CD8-positive, alpha-beta T cell (primary cell): ENCODE measurements at regions of chr6 and their contacts with region 1.

Region 1: DNA sequence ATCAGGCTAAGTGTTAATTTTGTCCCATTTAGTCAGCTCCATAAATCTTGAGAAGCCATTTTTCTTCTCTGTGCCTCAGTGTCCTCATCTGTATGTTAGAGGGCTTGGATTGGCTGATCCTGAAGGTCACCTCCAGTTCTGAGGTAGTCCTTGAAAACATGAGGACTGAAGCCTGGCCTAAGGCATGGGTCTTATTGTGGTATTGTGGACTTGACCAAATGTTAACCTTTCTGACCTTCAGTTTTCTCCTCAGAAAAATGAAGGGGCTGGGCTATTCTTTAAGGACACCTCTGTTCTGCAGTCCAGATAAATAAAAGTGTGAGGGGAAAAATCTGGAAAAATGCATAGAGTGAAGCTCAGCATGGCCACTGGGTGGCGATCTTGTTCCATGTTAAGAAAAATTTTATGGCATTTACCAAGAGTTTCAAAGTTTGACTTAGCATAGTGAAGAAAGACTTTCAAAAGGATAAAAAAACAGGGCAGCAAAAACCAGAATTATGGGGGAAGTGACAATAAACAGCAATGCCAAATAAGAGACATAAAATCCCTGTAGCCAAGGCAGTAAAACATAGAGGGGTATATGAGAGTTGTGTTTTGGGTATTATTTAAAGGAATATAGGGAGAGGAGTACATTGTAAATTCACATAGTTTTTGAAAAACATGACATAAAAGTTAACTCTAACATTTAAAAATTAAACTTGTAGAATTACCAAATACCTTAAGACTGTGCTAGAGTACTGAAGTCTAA is 13.2 kb upstream of the TFB1M start:
- DNase-seq: peak in 8 of 9 experiments; percentile 37 to 76 (median 64)
- ATAC-seq: peak; percentile 58
- H3K4me3 ChIP-seq: no peak overlapping the region
- H3K4me3 Mint-ChIP-seq: no peak overlapping the region
- H3K27ac ChIP-seq: no peak overlapping the region
- H3K27ac Mint-ChIP-seq: peak overlapping the region; percentile 3
- H3K4me1 ChIP-seq: peaks cover 10% of the 10 kb centered on the region
- H3K4me1 Mint-ChIP-seq: peaks cover 11% of the 10 kb centered on the region
- H3K27me3 ChIP-seq: no peaks in the 10 kb centered on the region
- H3K27me3 Mint-ChIP-seq: no peaks in the 10 kb centered on the region
- CTCF ChIP-seq: peak; percentile 89

Region 2: GRCh38 chr6:155301867-155302266 is 25.6 kb before region 1 on chr6:
- CTCF ChIA-PET with region 1: no interaction called
- POLR2A ChIA-PET with region 1: no interaction called
- intact Hi-C with region 1: no loop called
- DNase-seq: no peak
- ATAC-seq: no peak
- H3K4me3 ChIP-seq: no peak overlapping the region
- H3K4me3 Mint-ChIP-seq: no peak overlapping the region
- H3K27ac ChIP-seq: no peak overlapping the region
- H3K27ac Mint-ChIP-seq: no peak overlapping the region
- H3K4me1 ChIP-seq: no peaks in the 10 kb centered on the region
- H3K4me1 Mint-ChIP-seq: peaks cover 10% of the 10 kb centered on the region
- H3K27me3 ChIP-seq: no peaks in the 10 kb centered on the region
- H3K27me3 Mint-ChIP-seq: no peaks in the 10 kb centered on the region
- CTCF ChIP-seq: no peak

Region 3: DNA sequence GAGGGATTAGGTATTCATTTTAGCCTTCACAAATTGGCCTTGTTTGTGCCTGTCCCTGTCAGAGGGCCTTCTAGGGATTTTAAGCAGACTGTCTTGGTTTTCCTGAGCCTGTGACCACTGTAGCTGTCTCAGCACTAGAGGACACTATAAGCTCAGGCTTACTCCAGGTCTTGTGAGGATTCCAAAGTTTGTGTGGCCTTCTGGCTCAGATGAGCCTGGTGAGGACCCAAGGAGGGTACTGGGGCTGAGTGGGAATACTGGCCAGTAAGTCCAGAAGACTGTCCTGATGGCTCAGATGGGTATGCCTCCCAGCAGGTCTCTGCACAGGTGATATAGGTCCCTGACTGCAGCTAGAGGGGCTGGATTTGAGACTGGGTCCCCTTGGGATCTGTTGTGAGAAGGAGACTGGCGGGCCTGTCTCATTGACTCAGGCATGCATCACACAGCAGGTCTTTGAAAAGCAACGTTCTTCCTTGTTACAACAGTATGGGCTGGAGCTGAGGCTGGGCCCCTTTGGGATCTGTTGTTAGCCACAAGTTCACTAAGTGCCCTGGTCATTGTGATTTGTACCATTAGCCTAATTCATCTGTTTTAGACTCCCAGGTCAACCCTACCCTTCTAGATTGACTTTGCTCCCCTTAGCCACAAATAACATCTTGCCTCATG is 13.1 kb after region 1 on chr6:
- CTCF ChIA-PET with region 1: interaction called, 11 read pairs
- POLR2A ChIA-PET with region 1: no interaction called
- intact Hi-C with region 1: no loop called
- DNase-seq: no peak
- ATAC-seq: no peak
- H3K4me3 ChIP-seq: no peak overlapping the region
- H3K4me3 Mint-ChIP-seq: no peak overlapping the region
- H3K27ac ChIP-seq: no peak overlapping the region
- H3K27ac Mint-ChIP-seq: no peak overlapping the region
- H3K4me1 ChIP-seq: peaks cover 13% of the 10 kb centered on the region
- H3K4me1 Mint-ChIP-seq: peaks cover 17% of the 10 kb centered on the region
- H3K27me3 ChIP-seq: no peaks in the 10 kb centered on the region
- H3K27me3 Mint-ChIP-seq: no peaks in the 10 kb centered on the region
- CTCF ChIP-seq: no peak

Region 4: GRCh38 chr6:156396068-156396771 is 1068.7 kb after region 1 on chr6:
- CTCF ChIA-PET with region 1: no interaction called
- POLR2A ChIA-PET with region 1: no interaction called
- intact Hi-C with region 1: loop called in 1 of 2 experiments (anchors 10 kb)
- DNase-seq: peak in 5 of 9 experiments; percentile 10 to 82 (median 56)
- ATAC-seq: peak; percentile 78
- H3K4me3 ChIP-seq: peak overlapping the region in 1 of 2 experiments; percentile 37
- H3K4me3 Mint-ChIP-seq: peak overlapping the region; percentile 73
- H3K27ac ChIP-seq: peak overlapping the region; percentile 64 to 67
- H3K27ac Mint-ChIP-seq: peak overlapping the region; percentile 97
- H3K4me1 ChIP-seq: peaks cover 45% of the 10 kb centered on the region
- H3K4me1 Mint-ChIP-seq: peaks cover 62% of the 10 kb centered on the region
- H3K27me3 ChIP-seq: peaks cover 0 to 3% of the 10 kb centered on the region in 2 experiments
- H3K27me3 Mint-ChIP-seq: peaks cover 8% of the 10 kb centered on the region
- CTCF ChIP-seq: no peak

Region 5: GRCh38 chr6:156662025-156662445 is 1334.5 kb after region 1 on chr6:
- CTCF ChIA-PET with region 1: no interaction called
- POLR2A ChIA-PET with region 1: no interaction called
- intact Hi-C with region 1: loop called (anchors 5 kb)
- DNase-seq: peak in 6 of 9 experiments; percentile 5 to 64 (median 38)
- ATAC-seq: peak; percentile 49
- H3K4me3 ChIP-seq: no peak overlapping the region
- H3K4me3 Mint-ChIP-seq: no peak overlapping the region
- H3K27ac ChIP-seq: no peak overlapping the region
- H3K27ac Mint-ChIP-seq: no peak overlapping the region
- H3K4me1 ChIP-seq: no peaks in the 10 kb centered on the region
- H3K4me1 Mint-ChIP-seq: no peaks in the 10 kb centered on the region
- H3K27me3 ChIP-seq: no peaks in the 10 kb centered on the region
- H3K27me3 Mint-ChIP-seq: peaks cover 3% of the 10 kb centered on the region
- CTCF ChIP-seq: peak; percentile 60

Region 6: DNA sequence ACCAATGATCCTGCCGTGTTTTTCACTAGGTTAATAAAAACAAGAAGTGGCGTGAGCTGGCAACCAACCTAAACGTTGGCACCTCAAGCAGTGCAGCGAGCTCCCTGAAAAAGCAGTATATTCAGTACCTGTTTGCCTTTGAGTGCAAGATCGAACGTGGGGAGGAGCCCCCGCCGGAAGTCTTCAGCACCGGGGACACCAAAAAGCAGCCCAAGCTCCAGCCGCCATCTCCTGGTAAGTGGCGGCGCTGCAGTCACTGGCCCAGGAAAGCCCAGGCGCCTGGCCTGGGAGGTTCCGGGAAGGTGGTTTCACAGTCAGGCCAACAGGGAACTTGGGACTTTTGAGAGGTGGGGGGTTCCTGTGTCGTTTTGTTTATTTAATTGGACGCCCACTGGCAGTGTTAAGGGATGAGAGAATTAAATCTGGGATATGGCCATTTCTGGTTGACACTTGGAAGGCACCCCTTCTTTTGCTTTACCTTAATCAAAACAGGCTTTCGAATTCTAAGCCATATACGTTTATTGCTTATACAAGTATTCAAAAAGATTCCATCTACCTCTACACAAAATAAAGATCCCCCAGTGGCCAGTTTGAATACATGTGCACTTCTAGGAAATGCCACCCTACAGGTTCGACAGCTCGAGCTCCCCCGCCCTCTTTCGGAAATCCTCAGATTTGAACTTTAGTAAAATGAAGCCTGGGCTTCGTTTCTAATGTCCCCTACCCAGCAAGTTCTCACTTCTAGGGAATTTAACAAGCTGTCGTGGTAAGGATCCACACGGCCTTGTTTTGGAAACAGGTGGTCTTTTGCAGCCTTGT is 1856.9 kb after region 1 on chr6:
- CTCF ChIA-PET with region 1: no interaction called
- POLR2A ChIA-PET with region 1: no interaction called
- intact Hi-C with region 1: loop called in 1 of 2 experiments (anchors 1 kb)
- DNase-seq: peak; percentile 17 to 71 (median 64)
- ATAC-seq: peak; percentile 89
- H3K4me3 ChIP-seq: no peak overlapping the region
- H3K4me3 Mint-ChIP-seq: no peak overlapping the region
- H3K27ac ChIP-seq: no peak overlapping the region
- H3K27ac Mint-ChIP-seq: peak overlapping the region; percentile 10
- H3K4me1 ChIP-seq: no peaks in the 10 kb centered on the region
- H3K4me1 Mint-ChIP-seq: peaks cover 17% of the 10 kb centered on the region
- H3K27me3 ChIP-seq: no peaks in the 10 kb centered on the region
- H3K27me3 Mint-ChIP-seq: no peaks in the 10 kb centered on the region
- CTCF ChIP-seq: peak; percentile 69